Activated naive CD4-positive, alpha-beta T cell treated with anti-CD3 and anti-CD28 coated beads for 36 hours (primary cell): ENCODE measurements at regions of chr1 and their contacts with region 1.

Region 1: GRCh38 chr1:3796215-3797061 is at the start of gene LRRC47:
- DNase-seq: peak; percentile 96
- H3K4me3 Mint-ChIP-seq: peak within 1 kb of the TSS; percentile 95
- H3K27ac Mint-ChIP-seq: peak within 1 kb of the TSS; percentile 82
- H3K4me1 Mint-ChIP-seq: peaks cover 43% of the 10 kb centered on the region
- H3K27me3 Mint-ChIP-seq: peaks cover 9% of the 10 kb centered on the region
- total RNA-seq, gene LRRC47: 22.0 to 23.9 TPM

Region 2: DNA sequence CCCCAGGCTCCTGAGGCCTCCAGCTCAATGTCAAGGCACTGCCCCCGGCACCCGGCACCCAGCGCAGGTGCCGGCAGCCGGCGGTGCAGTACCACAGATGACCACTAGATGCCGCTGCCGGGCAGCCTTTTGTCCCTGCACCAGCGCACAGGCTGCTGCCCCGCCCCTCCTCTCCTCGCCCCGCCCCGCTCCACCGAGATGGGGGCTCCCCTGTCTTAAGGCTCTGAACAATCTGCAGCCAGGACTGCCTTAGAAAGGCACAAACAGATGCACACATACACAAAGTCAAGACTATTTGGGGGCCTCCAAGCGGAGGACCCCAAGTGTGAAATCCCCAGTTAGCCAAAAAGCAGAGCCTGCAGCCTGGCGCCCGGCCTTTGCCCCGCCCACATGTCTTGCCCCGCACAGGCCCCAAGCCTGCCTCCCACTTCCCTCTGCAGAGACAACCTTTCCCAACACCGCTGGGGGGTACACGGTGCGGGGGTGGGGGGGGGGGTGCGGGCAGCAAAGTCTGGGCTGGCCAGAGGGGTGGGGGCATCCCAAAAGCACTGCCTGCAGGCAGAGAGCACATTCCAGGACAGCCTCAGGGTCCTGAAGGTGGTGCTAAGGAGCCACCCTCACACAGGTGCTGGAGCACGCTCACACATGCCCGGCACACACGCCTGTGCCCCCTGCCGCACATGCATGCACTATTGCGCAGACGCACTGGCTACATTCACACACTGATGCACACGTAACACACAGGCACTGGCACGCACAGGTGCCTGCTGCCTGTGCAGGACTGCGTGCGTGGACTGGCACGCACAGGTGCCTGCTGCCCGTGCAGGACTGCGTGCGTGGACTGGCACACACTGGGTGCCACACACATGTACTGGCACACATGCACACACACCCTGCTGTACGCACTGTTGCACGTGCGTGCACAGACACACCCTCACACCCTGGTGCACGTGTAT is 304.9 kb before region 1 on chr1:
- CTCF ChIA-PET with region 1: no interaction called
- intact Hi-C with region 1: loop called (anchors 1 kb)
- DNase-seq: peak; percentile 92
- H3K4me3 Mint-ChIP-seq: no peak overlapping the region
- H3K27ac Mint-ChIP-seq: no peak overlapping the region
- H3K4me1 Mint-ChIP-seq: peaks cover 5% of the 10 kb centered on the region
- H3K27me3 Mint-ChIP-seq: no peaks in the 10 kb centered on the region

Region 3: DNA sequence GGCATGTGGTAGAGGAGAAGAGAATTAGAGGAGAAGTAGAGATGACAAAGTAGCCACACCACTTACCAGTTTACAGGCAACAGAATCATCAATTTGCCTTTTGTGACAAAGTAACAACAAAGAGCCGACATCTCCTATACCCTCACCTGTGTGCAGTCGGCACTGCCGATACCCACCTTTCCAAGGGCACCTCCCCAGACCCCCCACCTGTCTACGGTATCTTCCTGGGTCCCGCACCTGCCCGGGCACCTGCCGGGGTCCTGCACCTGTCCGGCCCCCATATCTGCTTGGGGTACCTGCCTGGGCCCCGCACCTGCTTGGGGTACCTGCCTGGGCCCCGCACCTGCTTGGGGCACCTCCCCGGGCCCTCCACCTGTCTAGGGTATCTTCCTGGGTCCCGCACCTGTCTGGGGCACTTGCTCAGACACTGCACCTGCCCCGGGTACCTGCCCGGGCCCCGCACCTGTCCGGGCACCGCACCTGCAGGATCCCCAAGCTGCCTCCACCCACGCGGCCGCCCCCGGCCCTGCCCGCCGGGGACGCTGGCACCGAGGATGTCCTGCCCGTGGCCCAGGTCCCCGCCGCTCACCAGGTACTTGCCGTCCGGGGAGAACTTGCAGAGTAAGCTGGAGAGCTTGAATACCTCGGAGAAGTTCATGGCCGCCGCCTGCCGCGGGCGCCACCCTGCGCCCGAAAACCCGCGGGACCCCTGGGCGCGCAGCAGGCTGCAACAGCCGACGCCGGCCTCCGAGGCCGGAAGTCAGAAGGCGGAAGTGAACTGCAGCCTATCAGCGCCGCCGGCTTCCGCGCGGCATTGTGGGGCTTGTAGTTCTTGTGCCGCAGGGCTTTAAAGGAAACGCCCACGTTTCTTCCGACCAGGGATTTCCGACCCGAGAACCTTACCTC is 146.8 kb before region 1 on chr1 and contains the start of gene WRAP73:
- CTCF ChIA-PET with region 1: no interaction called
- intact Hi-C with region 1: loop called (anchors 1 kb)
- DNase-seq: peak; percentile 95
- H3K4me3 Mint-ChIP-seq: peak within 1 kb of the TSS; percentile 76
- H3K27ac Mint-ChIP-seq: no peak within 1 kb of the TSS
- H3K4me1 Mint-ChIP-seq: peaks cover 22% of the 10 kb centered on the region
- H3K27me3 Mint-ChIP-seq: peaks cover 24% of the 10 kb centered on the region
- total RNA-seq, gene WRAP73: 32.4 to 35.4 TPM

Region 4: GRCh38 chr1:3746830-3747521 is 49.5 kb before region 1 on chr1:
- CTCF ChIA-PET with region 1: no interaction called
- intact Hi-C with region 1: loop called (anchors 1 kb)
- DNase-seq: peak; percentile 93
- H3K4me3 Mint-ChIP-seq: peak overlapping the region; percentile 75
- H3K27ac Mint-ChIP-seq: peak overlapping the region; percentile 24
- H3K4me1 Mint-ChIP-seq: peaks cover 35% of the 10 kb centered on the region
- H3K27me3 Mint-ChIP-seq: no peaks in the 10 kb centered on the region

Region 5: GRCh38 chr1:3772027-3772714 is 24.3 kb before region 1 on chr1:
- CTCF ChIA-PET with region 1: interaction called, 5 read pairs
- intact Hi-C with region 1: loop called (anchors 1 kb)
- DNase-seq: peak; percentile 94
- H3K4me3 Mint-ChIP-seq: peak overlapping the region; percentile 65
- H3K27ac Mint-ChIP-seq: peak overlapping the region; percentile 8
- H3K4me1 Mint-ChIP-seq: peaks cover 12% of the 10 kb centered on the region
- H3K27me3 Mint-ChIP-seq: no peaks in the 10 kb centered on the region

Region 6: DNA sequence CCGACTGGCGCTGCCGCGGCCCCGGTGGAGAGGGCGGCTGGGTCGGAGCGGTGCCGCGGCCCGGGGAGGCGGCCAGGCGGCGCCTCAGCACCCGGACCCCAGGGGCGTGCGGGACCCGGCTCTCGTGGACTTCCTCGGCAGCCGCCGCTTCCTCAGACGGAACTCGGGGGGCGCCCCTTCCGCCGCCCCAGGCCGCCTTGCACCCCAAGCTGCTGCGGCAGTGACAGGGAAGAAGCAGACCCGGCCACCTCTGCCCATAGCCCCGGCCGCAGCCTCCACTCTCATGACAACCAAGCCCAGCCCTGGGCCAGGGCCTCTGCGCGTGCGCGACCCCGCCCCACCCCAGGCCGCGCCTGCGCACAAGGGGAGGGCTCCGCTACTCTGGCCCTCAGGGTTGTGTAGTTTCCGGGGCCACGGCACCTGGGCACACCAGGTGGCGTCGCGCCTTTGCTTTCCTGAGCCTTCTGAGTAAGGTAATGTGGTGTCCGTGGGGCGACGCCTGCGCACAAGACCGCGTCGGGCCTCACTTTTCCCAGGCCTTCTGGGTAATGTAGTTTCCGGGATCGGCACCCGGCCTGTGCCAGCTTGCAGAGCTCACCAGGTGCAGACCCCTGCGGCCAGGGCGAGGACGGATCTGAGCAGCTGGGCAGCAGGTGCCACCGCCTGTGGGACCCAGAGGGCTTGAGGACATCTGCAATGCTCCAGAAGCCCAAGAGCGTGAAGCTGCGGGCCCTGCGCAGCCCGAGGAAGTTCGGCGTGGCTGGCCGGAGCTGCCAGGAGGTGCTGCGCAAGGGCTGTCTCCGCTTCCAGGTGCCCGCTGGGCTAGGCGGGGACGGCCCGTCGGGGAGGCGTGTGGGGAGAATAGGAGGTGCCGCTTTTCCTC is 60.7 kb after region 1 on chr1 and contains the starts of genes CEP104 and DFFB:
- CTCF ChIA-PET with region 1: no interaction called
- intact Hi-C with region 1: loop called (anchors 1 kb)
- DNase-seq: peak; percentile 97
- H3K4me3 Mint-ChIP-seq: peak within 1 kb of the TSS; percentile 95
- H3K27ac Mint-ChIP-seq: peak within 1 kb of the TSS; percentile 82
- H3K4me1 Mint-ChIP-seq: peaks cover 29% of the 10 kb centered on the region
- H3K27me3 Mint-ChIP-seq: no peaks in the 10 kb centered on the region
- total RNA-seq, gene CEP104: 25.4 to 27.3 TPM
- total RNA-seq, gene DFFB: 6.3 to 6.5 TPM